ENCODE measurements at regions of chr1 and their contacts with region 1.

Region 1: GRCh38 chr1:84122780-84123382 is 21.2 kb upstream of the PRKACB start:
- DNase-seq: peak; percentile 65 to 67
- H3K4me3 ChIP-seq: no peak overlapping the region
- H3K27ac ChIP-seq: no peak overlapping the region
- H3K4me1 ChIP-seq: no peaks in the 10 kb centered on the region
- H3K27me3 ChIP-seq: no peaks in the 10 kb centered on the region
- CTCF ChIP-seq: peak in 5 of 6 experiments; percentile 28 to 82 (median 67)
- POLR2A ChIP-seq: no peak

Region 2: DNA sequence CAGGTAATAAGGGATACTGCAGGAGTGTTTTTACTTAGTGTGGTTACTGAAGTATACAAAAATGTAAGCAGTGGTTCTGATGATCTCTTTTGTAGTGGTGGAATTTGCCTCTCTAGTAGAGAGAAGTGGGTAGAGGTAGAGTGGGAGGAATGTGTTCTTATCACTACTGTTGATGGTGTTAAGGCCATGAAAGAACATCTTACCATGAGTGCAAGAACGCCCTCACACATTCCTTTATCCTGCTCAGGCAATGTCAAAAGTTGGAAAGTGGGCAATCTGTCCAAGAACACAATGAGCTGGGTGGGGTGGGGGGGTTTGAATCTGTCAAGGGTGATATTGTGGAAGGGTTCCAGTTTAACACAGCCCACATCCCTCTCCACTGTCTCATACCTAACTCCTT is 202.6 kb before region 1 on chr1:
- intact Hi-C with region 1: no loop called
- DNase-seq: no peak
- H3K4me3 ChIP-seq: no peak overlapping the region
- H3K27ac ChIP-seq: no peak overlapping the region
- H3K4me1 ChIP-seq: no peaks in the 10 kb centered on the region
- H3K27me3 ChIP-seq: no peaks in the 10 kb centered on the region
- CTCF ChIP-seq: no peak
- POLR2A ChIP-seq: no peak

Region 3: DNA sequence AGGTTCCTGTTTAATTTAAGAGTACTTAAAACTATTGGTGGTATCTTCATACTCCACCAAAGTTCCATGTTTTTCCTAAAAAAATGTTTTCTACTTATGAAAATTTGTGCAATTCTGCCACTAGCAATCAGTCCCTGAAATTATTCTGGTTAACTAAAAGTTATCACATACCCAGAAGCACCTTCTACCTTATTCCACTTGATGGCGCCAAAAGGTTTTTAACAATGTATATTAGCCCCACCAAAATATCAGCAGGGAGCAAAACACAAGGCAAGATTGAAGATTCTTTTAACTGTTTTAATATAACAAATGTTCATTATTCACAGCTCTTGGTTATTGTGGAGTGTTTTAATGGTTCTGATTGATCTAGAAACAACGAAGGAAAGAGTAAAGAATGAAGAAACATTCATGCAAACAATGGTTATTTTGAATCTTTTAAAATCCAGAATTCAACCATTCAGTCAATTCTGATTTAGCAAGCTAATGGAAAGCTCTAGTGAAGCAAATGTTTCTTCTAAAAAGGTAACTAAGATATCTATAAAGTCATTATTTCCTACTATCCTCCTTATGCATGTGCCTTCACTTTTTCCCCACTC is 191.1 kb before region 1 on chr1:
- intact Hi-C with region 1: loop called (anchors 5 kb)
- DNase-seq: peak; percentile 2 to 6
- H3K4me3 ChIP-seq: no peak overlapping the region
- H3K27ac ChIP-seq: no peak overlapping the region
- H3K4me1 ChIP-seq: peaks cover 0 to 5% of the 10 kb centered on the region in 2 donors
- H3K27me3 ChIP-seq: no peaks in the 10 kb centered on the region
- CTCF ChIP-seq: peak in 5 of 6 experiments; percentile 45 to 80 (median 76)
- POLR2A ChIP-seq: no peak

Region 4: GRCh38 chr1:84772428-84772943 is 649.6 kb after region 1 on chr1:
- intact Hi-C with region 1: loop called (anchors 10 kb)
- DNase-seq: peak; percentile 76 to 85
- H3K4me3 ChIP-seq: no peak overlapping the region
- H3K27ac ChIP-seq: no peak overlapping the region
- H3K4me1 ChIP-seq: no peaks in the 10 kb centered on the region
- H3K27me3 ChIP-seq: no peaks in the 10 kb centered on the region
- CTCF ChIP-seq: peak; percentile 69 to 93 (median 82)
- POLR2A ChIP-seq: no peak

Measured in thyroid gland (tissue), 4 donors.